Left lung (tissue), 14 donors: ENCODE measurements at regions of chr10 and their contacts with region 1.

Region 1: GRCh38 chr10:70549962-70550458 is 52.5 kb downstream of the PRF1 start:
- DNase-seq: peak; percentile 58 to 72 (median 65)
- ATAC-seq: peak; percentile 82
- H3K4me3 ChIP-seq: no peak overlapping the region
- H3K27ac ChIP-seq: no peak overlapping the region
- H3K4me1 ChIP-seq: peaks cover 0 to 6% of the 10 kb centered on the region in 2 donors
- H3K27me3 ChIP-seq: no peaks in the 10 kb centered on the region
- CTCF ChIP-seq: peak; percentile 86 to 88

Region 2: GRCh38 chr10:70381471-70382421 is 168.3 kb before region 1 on chr10:
- intact Hi-C with region 1: no loop called
- DNase-seq: peak in 2 of 4 donors; percentile 33 to 87
- ATAC-seq: peak; percentile 45
- H3K4me3 ChIP-seq: peak overlapping the region; percentile 70 to 86
- H3K27ac ChIP-seq: peak overlapping the region; percentile 69 to 70
- H3K4me1 ChIP-seq: peaks cover 0 to 20% of the 10 kb centered on the region in 2 donors
- H3K27me3 ChIP-seq: peaks cover 0 to 13% of the 10 kb centered on the region in 2 donors
- CTCF ChIP-seq: no peak

Region 3: DNA sequence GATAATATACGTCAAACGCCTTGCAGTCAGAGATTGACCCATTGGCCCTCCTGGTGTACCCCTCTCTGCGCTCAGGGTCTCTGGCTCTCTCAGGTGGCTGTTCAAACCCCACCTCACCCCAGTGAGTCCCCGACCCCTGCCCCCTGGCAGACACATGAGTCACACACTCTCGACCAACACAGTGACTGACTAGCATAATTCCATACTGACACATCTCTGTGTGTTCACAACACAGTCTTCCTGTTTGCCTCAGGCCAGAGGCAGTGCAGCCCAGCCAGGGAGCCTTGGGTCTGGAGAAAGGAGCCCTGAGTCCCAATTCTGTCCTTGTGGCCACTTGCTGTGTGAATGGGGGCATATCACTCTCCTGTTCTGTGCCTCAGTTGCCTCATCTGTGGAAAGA is 31.3 kb before region 1 on chr10:
- intact Hi-C with region 1: no loop called
- DNase-seq: no peak
- ATAC-seq: no peak
- H3K4me3 ChIP-seq: no peak overlapping the region
- H3K27ac ChIP-seq: no peak overlapping the region
- H3K4me1 ChIP-seq: peaks cover 0 to 8% of the 10 kb centered on the region in 2 donors
- H3K27me3 ChIP-seq: no peaks in the 10 kb centered on the region
- CTCF ChIP-seq: no peak

Region 4: DNA sequence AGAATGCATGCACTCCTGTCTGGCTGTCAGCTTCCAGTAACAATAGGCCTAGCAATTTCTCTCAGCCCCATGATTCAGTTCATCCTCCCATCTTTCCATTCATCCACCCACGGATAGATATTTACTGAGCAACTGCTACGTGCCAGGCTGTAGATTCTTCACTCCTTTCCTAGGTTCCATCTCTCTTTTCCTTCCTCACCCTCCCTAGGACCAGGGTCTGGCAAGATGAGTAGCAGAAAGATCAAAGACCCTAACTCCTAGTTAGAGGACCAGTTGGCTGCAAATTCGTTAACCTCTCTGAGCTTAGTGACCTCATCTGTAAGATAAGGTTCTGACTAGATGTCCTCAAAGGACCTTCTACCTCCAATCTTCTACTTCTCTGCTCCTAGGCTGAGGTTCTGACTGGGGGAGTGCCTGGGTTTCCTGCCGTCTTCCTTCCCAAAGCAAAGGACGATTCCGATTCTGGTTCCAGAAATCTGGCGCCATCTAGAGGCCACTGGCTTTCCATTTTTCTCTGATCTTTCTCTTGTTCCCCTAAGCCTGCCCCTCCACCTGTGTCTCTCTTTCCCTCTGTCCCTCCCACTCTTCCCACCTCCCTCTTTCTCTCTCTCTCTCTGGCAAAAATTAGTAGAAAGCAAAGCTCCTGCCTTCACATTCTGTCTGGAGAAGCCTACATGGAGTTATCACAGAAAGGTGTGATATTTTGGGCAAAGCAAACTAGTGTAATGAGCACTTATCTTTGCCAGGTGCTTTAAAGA is 208.9 kb after region 1 on chr10:
- intact Hi-C with region 1: loop called (anchors 5 to 10 kb)
- DNase-seq: peak in 3 of 4 donors; percentile 52 to 83 (median 65)
- ATAC-seq: peak; percentile 75
- H3K4me3 ChIP-seq: no peak overlapping the region
- H3K27ac ChIP-seq: no peak overlapping the region
- H3K4me1 ChIP-seq: peaks cover 0 to 3% of the 10 kb centered on the region in 2 donors
- H3K27me3 ChIP-seq: no peaks in the 10 kb centered on the region
- CTCF ChIP-seq: peak; percentile 53 to 64